Activated T-helper 2 cell treated with anti-CD3 and anti-CD28 coated beads, Interferon-gamma antibody, Interleukin-2, Interleukin-4, amounts not matched to agents 10 μg/mL and 5 μg/mL and 100 μg/mL, durations not matched to agents 14 hours and 24 hours and 36 hours (primary cell): ENCODE measurements at regions of chr10 and their contacts with region 1.

Region 1: DNA sequence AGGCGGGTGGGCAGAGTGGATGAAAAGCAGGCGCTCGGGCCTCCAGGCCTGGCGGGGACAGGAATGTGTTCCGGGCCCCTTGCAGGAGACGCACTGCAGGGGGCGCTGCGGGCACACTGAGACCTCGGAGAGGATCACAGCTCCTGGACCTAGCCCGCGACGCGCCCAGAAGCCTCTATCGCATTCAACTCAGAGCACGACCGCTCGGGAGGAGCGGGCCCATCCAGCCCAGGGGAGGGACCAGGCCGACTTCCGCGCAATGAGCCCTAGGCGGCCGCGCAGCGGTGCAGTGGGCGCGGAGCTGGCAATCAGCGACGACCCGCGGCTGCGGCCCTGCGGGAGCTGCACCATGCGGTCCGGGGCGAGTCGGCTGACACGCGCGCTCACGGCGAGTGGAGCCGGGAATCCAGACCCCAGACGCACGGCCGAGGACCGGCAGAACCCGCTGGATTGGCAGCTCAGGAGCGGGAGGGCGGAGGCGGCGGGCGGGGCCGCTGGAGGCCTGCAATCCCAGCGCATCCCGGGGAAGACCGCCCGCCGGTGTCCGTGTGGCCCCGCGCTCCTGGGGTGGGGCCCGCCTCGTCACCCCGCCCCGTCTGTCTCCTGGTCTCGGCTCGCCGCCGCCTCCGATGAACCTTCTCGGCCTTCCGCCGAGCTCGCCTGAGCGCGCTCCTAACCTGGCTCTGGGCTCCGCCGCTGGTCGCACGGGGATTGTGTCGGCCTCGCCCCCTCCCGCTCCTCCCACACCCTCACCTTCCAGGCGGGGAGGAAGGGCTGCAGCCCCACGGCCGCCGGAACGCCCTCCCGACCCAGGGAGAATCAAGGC is 33.5 kb upstream of the GRID1 start:
- DNase-seq: peak; percentile 90
- H3K4me3 Mint-ChIP-seq: peak overlapping the region; percentile 87
- H3K27ac Mint-ChIP-seq: peak overlapping the region; percentile 94
- H3K4me1 Mint-ChIP-seq: peaks cover 20% of the 10 kb centered on the region
- H3K27me3 Mint-ChIP-seq: peaks cover 23% of the 10 kb centered on the region

Region 2: GRCh38 chr10:86411281-86411841 is 11.3 kb after region 1 on chr10:
- intact Hi-C with region 1: loop called (anchors 1 kb)
- DNase-seq: no peak
- H3K4me3 Mint-ChIP-seq: peak overlapping the region; percentile 61
- H3K27ac Mint-ChIP-seq: peak overlapping the region; percentile 94
- H3K4me1 Mint-ChIP-seq: peaks cover 48% of the 10 kb centered on the region
- H3K27me3 Mint-ChIP-seq: no peaks in the 10 kb centered on the region

Region 3: GRCh38 chr10:86439544-86439943 is 39.5 kb after region 1 on chr10:
- intact Hi-C with region 1: loop called (anchors 5 kb)
- DNase-seq: no peak
- H3K4me3 Mint-ChIP-seq: no peak overlapping the region
- H3K27ac Mint-ChIP-seq: peak overlapping the region; percentile 4
- H3K4me1 Mint-ChIP-seq: peaks cover 19% of the 10 kb centered on the region
- H3K27me3 Mint-ChIP-seq: no peaks in the 10 kb centered on the region

Region 4: GRCh38 chr10:86521678-86522509 is 121.8 kb after region 1 on chr10 and contains the start of gene WAPL:
- intact Hi-C with region 1: loop called (anchors 1 kb)
- DNase-seq: peak; percentile 93
- H3K4me3 Mint-ChIP-seq: peak within 1 kb of the TSS; percentile 98
- H3K27ac Mint-ChIP-seq: peak within 1 kb of the TSS; percentile 89
- H3K4me1 Mint-ChIP-seq: peaks cover 46% of the 10 kb centered on the region
- H3K27me3 Mint-ChIP-seq: no peaks in the 10 kb centered on the region
- total RNA-seq, gene WAPL: 50.0 and 51.4 TPM in 2 replicates

Region 5: DNA sequence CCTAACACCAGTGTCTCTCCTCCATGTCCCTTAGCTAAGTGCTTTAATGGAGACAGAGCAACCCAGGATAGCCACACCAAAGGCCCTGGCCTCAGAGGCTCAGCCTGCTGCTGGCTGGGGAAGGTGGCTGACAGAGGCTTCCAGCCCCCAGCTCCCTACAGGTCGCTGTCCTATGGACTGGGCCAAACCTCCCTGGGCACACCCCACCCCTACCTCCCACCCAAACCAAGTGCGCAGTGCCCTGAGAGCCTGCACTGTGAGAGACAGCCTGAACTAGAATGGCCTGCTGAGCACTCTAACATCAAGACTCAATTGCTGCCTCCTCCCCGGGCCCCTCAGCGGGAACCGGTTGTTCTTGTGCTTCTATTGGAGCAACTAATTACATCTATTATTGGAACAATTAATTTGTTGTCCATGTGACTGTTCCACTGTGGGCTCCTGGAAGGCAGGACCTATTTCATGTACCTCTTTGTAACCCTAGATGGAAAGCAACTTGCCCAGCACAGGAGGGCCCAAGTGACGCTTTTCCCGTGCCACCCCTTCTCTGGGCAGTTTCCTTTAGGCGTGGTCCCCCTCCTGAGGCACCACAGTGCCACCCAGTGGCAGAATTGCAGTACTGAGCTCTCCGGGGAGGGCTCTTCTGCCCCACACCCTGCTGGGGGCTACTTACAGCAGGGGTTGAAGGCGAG is 185.1 kb after region 1 on chr10:
- intact Hi-C with region 1: loop called (anchors 1 kb)
- DNase-seq: peak; percentile 67
- H3K4me3 Mint-ChIP-seq: no peak overlapping the region
- H3K27ac Mint-ChIP-seq: no peak overlapping the region
- H3K4me1 Mint-ChIP-seq: no peaks in the 10 kb centered on the region
- H3K27me3 Mint-ChIP-seq: no peaks in the 10 kb centered on the region

Region 6: DNA sequence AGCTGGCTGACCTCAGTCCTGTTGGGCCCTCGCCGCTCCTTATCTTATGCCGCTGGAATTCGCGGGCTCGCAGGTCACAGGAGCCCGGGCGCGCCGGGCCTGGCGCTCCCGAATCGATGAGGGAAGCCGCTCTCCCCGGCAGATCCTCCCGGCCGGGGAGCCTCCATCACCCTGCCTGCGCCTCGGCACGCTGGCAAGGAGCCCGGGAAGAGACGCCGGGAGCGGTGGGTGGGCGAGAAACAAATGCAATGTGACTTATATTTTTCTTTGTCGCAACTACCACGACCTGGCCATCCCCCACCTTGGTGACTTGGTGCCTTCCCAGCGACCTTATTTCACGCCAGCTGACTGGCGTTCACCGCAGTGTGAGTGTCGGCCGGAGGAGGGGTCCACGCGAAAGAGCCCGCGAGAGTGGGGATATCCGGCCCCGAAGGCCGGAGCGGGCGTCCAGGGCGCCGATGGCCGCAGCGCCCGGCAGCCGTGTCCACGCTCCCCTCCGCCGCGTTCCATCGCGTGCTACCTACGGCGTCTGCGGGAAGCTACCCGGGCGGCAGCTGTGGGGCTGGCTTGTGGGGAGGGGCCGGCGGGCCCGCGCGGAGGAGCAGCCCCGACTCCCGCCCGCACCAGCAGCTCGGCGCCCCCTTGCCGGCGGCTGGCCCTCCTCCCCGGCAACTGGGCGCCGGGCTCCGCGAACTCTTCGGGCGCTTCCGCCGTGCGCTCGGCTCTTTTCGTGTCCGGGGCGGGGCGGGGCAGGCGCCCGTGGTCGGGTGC is 355.8 kb after region 1 on chr10:
- intact Hi-C with region 1: loop called (anchors 10 kb)
- DNase-seq: peak; percentile 84
- H3K4me3 Mint-ChIP-seq: peak overlapping the region; percentile 80
- H3K27ac Mint-ChIP-seq: peak overlapping the region; percentile 67
- H3K4me1 Mint-ChIP-seq: peaks cover 41% of the 10 kb centered on the region
- H3K27me3 Mint-ChIP-seq: peaks cover 43% of the 10 kb centered on the region

Region 7: GRCh38 chr10:87094373-87095235 is 694.5 kb after region 1 on chr10 and contains the starts of genes GLUD1 and SHLD2:
- intact Hi-C with region 1: loop called (anchors 10 kb)
- DNase-seq: peak; percentile 90
- H3K4me3 Mint-ChIP-seq: peak within 1 kb of the TSS; percentile 95
- H3K27ac Mint-ChIP-seq: peak within 1 kb of the TSS; percentile 96
- H3K4me1 Mint-ChIP-seq: peaks cover 45% of the 10 kb centered on the region
- H3K27me3 Mint-ChIP-seq: no peaks in the 10 kb centered on the region
- total RNA-seq, gene GLUD1: 105 and 109 TPM in 2 replicates
- total RNA-seq, gene SHLD2: 39.9 and 41.7 TPM in 2 replicates